T-cell (primary cell): ENCODE measurements at regions of chr17 and their contacts with region 1.

Region 1: GRCh38 chr17:36601303-36602029 is at the start of gene MRM1:
- DNase-seq: peak; percentile 67 to 92 (median 81)
- ATAC-seq: peak; percentile 87 to 90 (median 88)
- H3K4me3 ChIP-seq: peak within 1 kb of the TSS; percentile 74 to 99
- H3K4me3 Mint-ChIP-seq: peak within 1 kb of the TSS; percentile 88 to 93 (median 88)
- H3K27ac ChIP-seq: peak within 1 kb of the TSS; percentile 77
- H3K27ac Mint-ChIP-seq: peak within 1 kb of the TSS; percentile 91 to 95
- H3K4me1 ChIP-seq: peaks cover 5 to 33% of the 10 kb centered on the region in 2 experiments
- H3K4me1 Mint-ChIP-seq: peaks cover 42 to 45% (median 45%) of the 10 kb centered on the region in 3 donors
- H3K27me3 ChIP-seq: no peaks in the 10 kb centered on the region
- H3K27me3 Mint-ChIP-seq: no peaks in the 10 kb centered on the region
- total RNA-seq, gene MRM1: 2.3 to 18.2 (median 15.4) TPM

Region 2: DNA sequence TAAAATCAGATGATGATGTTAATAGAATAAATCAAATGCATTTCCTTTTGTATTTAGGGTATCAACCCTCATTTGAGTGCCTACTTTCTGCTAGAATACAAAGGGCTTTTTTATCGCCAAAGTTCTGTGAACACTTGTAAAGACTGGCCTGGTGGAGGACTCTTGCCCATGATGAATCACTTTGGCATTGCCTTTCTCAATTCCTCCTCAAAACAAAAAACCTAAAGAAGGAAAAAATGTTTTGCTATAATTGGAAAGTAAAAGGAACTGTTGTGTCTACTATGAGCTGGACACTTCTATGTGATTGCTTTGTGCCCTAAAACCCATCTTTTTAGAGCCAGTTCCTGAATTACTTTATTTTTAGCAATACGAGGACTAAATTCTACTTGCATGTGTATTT is 22.8 kb before region 1 on chr17:
- CTCF ChIA-PET with region 1: interaction called, 3 to 11 read pairs
- POLR2A ChIA-PET with region 1: no interaction called
- DNase-seq: no peak
- ATAC-seq: no peak
- H3K4me3 ChIP-seq: no peak overlapping the region
- H3K4me3 Mint-ChIP-seq: no peak overlapping the region
- H3K27ac ChIP-seq: no peak overlapping the region
- H3K27ac Mint-ChIP-seq: no peak overlapping the region
- H3K4me1 ChIP-seq: no peaks in the 10 kb centered on the region
- H3K4me1 Mint-ChIP-seq: peaks cover 9 to 14% (median 14%) of the 10 kb centered on the region in 3 donors
- H3K27me3 ChIP-seq: no peaks in the 10 kb centered on the region
- H3K27me3 Mint-ChIP-seq: no peaks in the 10 kb centered on the region

Region 3: GRCh38 chr17:36760425-36760824 is 159.0 kb after region 1 on chr17:
- CTCF ChIA-PET with region 1: interaction called, 3 to 11 read pairs
- POLR2A ChIA-PET with region 1: no interaction called
- DNase-seq: no peak
- ATAC-seq: no peak
- H3K4me3 ChIP-seq: no peak overlapping the region
- H3K4me3 Mint-ChIP-seq: no peak overlapping the region
- H3K27ac ChIP-seq: no peak overlapping the region
- H3K27ac Mint-ChIP-seq: no peak overlapping the region
- H3K4me1 ChIP-seq: peaks cover 6 to 14% of the 10 kb centered on the region in 2 experiments
- H3K4me1 Mint-ChIP-seq: peaks cover 15 to 19% (median 16%) of the 10 kb centered on the region in 3 donors
- H3K27me3 ChIP-seq: peaks cover 0 to 11% of the 10 kb centered on the region in 2 experiments
- H3K27me3 Mint-ChIP-seq: peaks cover 0 to 3% of the 10 kb centered on the region in 2 donors

Region 4: DNA sequence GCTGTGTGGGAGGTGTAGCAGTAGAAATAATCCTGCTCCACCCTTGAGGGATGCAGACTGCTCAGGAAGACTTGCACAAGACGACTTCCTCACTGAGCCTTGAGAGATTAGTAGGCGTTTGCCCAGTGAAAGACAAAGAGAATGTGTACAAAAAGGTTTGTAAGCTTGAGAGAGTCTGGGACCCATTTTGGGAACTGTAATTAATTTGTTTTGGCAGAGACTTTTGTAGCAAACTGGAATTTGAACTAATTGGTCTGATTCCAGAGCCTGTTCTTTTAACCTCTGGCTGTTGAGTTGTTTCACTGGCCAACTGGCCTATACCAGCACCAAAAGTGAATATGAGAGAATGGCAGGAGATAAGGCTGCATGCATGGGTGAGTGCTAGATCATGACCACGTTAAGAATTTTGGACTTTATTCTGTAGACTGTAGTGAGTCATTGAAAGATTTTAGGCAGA is 422.7 kb after region 1 on chr17:
- CTCF ChIA-PET with region 1: no interaction called
- POLR2A ChIA-PET with region 1: no interaction called
- DNase-seq: no peak
- ATAC-seq: no peak
- H3K4me3 ChIP-seq: no peak overlapping the region
- H3K4me3 Mint-ChIP-seq: no peak overlapping the region
- H3K27ac ChIP-seq: no peak overlapping the region
- H3K27ac Mint-ChIP-seq: no peak overlapping the region
- H3K4me1 ChIP-seq: no peaks in the 10 kb centered on the region
- H3K4me1 Mint-ChIP-seq: peaks cover 16 to 21% (median 17%) of the 10 kb centered on the region in 3 donors
- H3K27me3 ChIP-seq: no peaks in the 10 kb centered on the region
- H3K27me3 Mint-ChIP-seq: no peaks in the 10 kb centered on the region

Region 5: GRCh38 chr17:37239690-37240334 is 638.3 kb after region 1 on chr17:
- CTCF ChIA-PET with region 1: interaction called, 5 to 19 read pairs
- POLR2A ChIA-PET with region 1: no interaction called
- DNase-seq: peak in 2 of 35 experiments; percentile 3 to 50
- ATAC-seq: no peak
- H3K4me3 ChIP-seq: no peak overlapping the region
- H3K4me3 Mint-ChIP-seq: no peak overlapping the region
- H3K27ac ChIP-seq: no peak overlapping the region
- H3K27ac Mint-ChIP-seq: no peak overlapping the region
- H3K4me1 ChIP-seq: no peaks in the 10 kb centered on the region
- H3K4me1 Mint-ChIP-seq: no peaks in the 10 kb centered on the region
- H3K27me3 ChIP-seq: no peaks in the 10 kb centered on the region
- H3K27me3 Mint-ChIP-seq: no peaks in the 10 kb centered on the region